Dorsolateral prefrontal cortex (tissue), 120 donors: ENCODE measurements at regions of chr20 and their contacts with region 1.

Region 1: GRCh38 chr20:33291830-33292355 is 8.9 kb downstream of the BPIFB1 start:
- DNase-seq: peak in 8 of 10 donors; percentile 22 to 71 (median 56)
- H3K4me3 ChIP-seq: no peak overlapping the region
- H3K27ac ChIP-seq: peak overlapping the region in 1 of 59 donors; percentile 2
- H3K27me3 ChIP-seq: peaks cover 0 to 5% (median 0%) of the 10 kb centered on the region in 45 donors
- CTCF ChIP-seq: peak; percentile 72 to 96 (median 88)

Region 2: DNA sequence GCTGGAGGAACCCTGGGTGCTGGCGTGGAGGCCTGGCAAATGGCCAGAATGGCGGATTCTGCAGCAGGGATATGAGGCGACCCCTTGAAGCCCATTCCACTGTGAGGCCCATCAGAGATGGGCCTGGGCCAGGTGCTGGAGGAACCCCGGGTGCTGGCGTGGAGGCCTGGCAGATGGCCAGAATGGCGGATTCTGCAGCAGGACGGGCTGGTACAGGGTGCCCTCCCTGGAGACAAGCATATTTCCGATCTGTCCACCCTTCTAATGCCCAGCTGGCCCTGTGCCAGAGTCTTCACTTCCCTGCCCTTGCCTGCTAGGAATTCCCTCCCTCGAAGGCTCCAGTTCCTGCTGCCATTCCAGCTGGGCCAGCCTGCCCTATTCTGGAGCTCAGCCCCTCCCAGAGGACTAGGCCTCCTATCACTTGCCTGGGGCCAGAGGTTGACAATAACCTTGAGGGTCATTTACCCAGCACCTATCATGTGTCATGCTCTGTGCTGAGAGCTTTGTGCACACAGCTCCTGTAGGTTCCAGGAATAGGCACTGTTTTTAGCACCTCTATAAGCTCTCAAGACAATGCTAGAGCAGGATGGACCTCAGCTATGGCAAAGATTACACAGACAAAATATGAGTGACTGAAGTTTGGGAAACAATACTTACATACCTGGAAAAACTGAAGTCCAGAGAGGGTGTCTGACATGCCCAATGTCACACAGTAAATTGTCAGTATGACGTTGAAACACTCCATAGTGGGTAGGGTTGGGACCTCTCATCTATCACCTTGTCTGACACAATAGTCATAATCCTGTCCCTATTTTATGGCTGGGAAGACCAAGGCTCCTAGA is 309.1 kb before region 1 on chr20:
- intact Hi-C with region 1: no loop called
- DNase-seq: peak in 5 of 10 donors; percentile 11 to 53 (median 31)
- H3K4me3 ChIP-seq: no peak overlapping the region
- H3K27ac ChIP-seq: peak overlapping the region in 58 of 59 donors; percentile 21 to 95 (median 84)
- H3K27me3 ChIP-seq: no peaks in the 10 kb centered on the region
- CTCF ChIP-seq: no peak

Region 3: DNA sequence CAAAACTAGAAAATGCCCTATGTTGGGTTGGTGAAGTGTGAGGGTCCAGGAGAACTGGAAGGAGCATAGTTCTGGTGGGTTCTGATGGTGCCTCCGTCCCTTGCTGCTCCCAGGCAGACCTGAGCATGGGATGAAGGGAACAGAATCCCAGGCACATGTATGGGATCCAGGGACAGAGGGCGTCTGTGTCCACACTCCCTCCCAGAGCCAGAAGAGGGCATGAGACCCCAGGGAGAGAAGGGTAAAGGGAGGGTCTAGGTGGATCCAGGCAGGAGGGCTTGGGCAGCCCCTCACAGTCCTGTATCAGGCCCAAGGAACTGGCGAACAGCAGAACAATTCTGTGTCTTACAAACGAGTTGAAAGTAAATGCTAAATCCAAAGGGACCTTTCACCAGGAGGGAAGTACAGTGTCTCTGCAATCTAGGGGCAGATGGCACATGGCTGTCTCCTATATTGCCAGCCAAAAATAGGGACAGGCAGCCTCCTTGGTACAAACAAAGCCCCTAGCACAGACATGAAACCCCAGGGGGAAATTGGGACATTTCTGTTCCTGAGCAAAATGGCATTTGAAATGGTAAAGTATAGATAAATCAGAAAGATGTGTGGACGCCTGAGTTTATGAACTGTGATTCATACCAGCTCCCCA is 58.6 kb before region 1 on chr20:
- intact Hi-C with region 1: loop called in 1 of 2 experiments (anchors 2 kb)
- DNase-seq: no peak
- H3K4me3 ChIP-seq: no peak overlapping the region
- H3K27ac ChIP-seq: no peak overlapping the region
- H3K27me3 ChIP-seq: peaks cover 0 to 11% (median 0%) of the 10 kb centered on the region in 45 donors
- CTCF ChIP-seq: peak in 38 of 56 donors; percentile 10 to 67 (median 26)

Region 4: DNA sequence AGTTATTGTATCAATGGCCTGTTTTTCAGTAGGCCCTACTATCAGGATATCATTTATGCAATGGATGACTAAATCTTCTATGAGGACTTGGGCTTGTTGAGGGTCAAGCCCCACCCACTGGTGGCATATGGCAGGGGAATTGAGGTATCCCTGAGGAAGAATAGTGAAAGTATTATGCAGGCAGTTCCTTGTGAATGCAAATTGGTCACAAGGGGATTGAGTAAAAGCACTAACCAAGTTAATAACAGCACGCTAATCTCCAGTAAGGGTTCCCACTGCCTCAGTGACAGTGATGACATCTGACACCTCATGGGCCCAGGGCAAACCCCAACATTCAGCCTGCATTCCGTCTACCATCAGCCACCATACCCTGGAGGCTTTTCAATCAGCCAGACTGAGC is 41.2 kb before region 1 on chr20:
- intact Hi-C with region 1: no loop called
- DNase-seq: no peak
- H3K4me3 ChIP-seq: no peak overlapping the region
- H3K27ac ChIP-seq: no peak overlapping the region
- H3K27me3 ChIP-seq: no peaks in the 10 kb centered on the region
- CTCF ChIP-seq: no peak

Region 5: DNA sequence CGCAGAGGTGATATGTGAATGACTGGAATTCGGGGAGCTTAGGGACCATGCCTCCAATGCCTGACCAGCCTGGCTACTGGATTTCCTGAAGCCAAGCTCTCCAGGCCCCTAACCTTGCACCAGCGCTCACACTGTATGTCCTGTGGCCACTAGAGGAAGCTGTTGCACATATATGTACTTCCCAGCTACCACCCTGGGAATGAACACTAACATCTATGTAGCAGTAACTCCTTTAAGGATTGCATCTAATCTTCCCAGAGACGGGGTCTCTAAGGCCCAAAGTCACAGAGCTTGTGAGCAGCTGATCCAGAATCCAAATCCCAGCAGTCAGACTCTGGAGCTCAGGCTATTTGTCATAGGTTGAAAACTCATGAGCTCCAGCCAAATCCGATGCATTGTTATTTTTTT is 29.2 kb before region 1 on chr20:
- intact Hi-C with region 1: loop called (anchors 1 to 5 kb)
- DNase-seq: peak in 9 of 10 donors; percentile 37 to 73 (median 59)
- H3K4me3 ChIP-seq: peak overlapping the region in 4 of 59 donors; percentile 2 to 28 (median 8)
- H3K27ac ChIP-seq: peak overlapping the region in 58 of 59 donors; percentile 40 to 94 (median 85)
- H3K27me3 ChIP-seq: no peaks in the 10 kb centered on the region
- CTCF ChIP-seq: peak; percentile 18 to 83 (median 69)